ENCODE measurements at regions of chr11 and their contacts with region 1.

Region 1: GRCh38 chr11:74702383-74703007 is 28.7 kb downstream of the CHRDL2 start:
- DNase-seq: peak; percentile 75
- H3K4me3 Mint-ChIP-seq: no peak overlapping the region
- H3K27ac Mint-ChIP-seq: no peak overlapping the region
- H3K4me1 Mint-ChIP-seq: peaks cover under 1% of the 10 kb centered on the region
- H3K27me3 Mint-ChIP-seq: peaks cover 1% of the 10 kb centered on the region

Region 2: GRCh38 chr11:74581954-74582547 is 120.4 kb before region 1 on chr11:
- CTCF ChIA-PET with region 1: no interaction called
- intact Hi-C with region 1: no loop called
- DNase-seq: no peak
- H3K4me3 Mint-ChIP-seq: no peak overlapping the region
- H3K27ac Mint-ChIP-seq: no peak overlapping the region
- H3K4me1 Mint-ChIP-seq: no peaks in the 10 kb centered on the region
- H3K27me3 Mint-ChIP-seq: no peaks in the 10 kb centered on the region

Region 3: DNA sequence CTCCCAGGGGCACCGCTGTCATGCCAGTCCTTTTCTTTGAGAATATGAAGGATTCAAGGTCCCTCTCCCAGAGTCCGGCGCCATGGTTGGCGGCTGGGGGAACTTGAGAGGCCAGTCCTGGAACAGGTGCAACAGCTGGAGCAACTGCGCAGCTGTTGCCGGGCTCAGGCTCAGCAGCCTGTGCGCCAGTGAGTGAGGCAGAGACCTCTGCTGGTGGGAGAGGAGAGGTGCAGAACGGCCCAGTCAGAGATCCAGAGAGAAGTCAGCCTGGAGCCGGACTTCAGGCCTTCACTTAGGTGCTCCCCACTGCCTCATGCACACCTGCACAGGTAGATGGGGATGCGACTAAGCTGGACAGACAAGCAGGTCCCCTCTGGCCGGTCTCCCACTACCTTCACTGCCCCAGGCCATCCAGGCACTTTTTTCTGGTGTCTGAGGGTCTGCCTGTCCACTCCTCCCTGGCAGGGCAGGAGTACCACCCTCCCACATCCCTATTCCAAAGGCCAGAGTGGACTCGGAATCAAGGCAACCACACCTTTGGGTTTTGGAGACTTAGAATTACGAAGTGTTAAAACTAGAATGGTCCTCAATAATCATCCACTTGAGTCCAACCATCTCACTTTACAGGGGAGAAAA is 24.2 kb after region 1 on chr11:
- CTCF ChIA-PET with region 1: interaction called, 112 read pairs
- intact Hi-C with region 1: loop called (anchors 1 kb)
- DNase-seq: peak; percentile 69
- H3K4me3 Mint-ChIP-seq: no peak overlapping the region
- H3K27ac Mint-ChIP-seq: no peak overlapping the region
- H3K4me1 Mint-ChIP-seq: peaks cover 9% of the 10 kb centered on the region
- H3K27me3 Mint-ChIP-seq: peaks cover 27% of the 10 kb centered on the region

Region 4: GRCh38 chr11:74739546-74740270 is 37.2 kb after region 1 on chr11:
- CTCF ChIA-PET with region 1: interaction called, 53 read pairs
- intact Hi-C with region 1: loop called (anchors 1 kb)
- DNase-seq: peak; percentile 53
- H3K4me3 Mint-ChIP-seq: no peak overlapping the region
- H3K27ac Mint-ChIP-seq: no peak overlapping the region
- H3K4me1 Mint-ChIP-seq: peaks cover 15% of the 10 kb centered on the region
- H3K27me3 Mint-ChIP-seq: peaks cover 15% of the 10 kb centered on the region

Region 5: GRCh38 chr11:74870485-74870884 is 168.0 kb after region 1 on chr11:
- CTCF ChIA-PET with region 1: interaction called, 6 read pairs
- intact Hi-C with region 1: loop called (anchors 2 kb)
- DNase-seq: no peak
- H3K4me3 Mint-ChIP-seq: no peak overlapping the region
- H3K27ac Mint-ChIP-seq: no peak overlapping the region
- H3K4me1 Mint-ChIP-seq: no peaks in the 10 kb centered on the region
- H3K27me3 Mint-ChIP-seq: no peaks in the 10 kb centered on the region

Measured in activated naive CD4-positive, alpha-beta T cell treated with anti-CD3 and anti-CD28 coated beads for 36 hours (primary cell).